Caki2 (cell line): ENCODE measurements at regions of chr1 and their contacts with region 1.

Region 1: GRCh38 chr1:225559326-225559725 is 93.6 kb downstream of the ENAH start:
- DNase-seq: no peak

Region 2: DNA sequence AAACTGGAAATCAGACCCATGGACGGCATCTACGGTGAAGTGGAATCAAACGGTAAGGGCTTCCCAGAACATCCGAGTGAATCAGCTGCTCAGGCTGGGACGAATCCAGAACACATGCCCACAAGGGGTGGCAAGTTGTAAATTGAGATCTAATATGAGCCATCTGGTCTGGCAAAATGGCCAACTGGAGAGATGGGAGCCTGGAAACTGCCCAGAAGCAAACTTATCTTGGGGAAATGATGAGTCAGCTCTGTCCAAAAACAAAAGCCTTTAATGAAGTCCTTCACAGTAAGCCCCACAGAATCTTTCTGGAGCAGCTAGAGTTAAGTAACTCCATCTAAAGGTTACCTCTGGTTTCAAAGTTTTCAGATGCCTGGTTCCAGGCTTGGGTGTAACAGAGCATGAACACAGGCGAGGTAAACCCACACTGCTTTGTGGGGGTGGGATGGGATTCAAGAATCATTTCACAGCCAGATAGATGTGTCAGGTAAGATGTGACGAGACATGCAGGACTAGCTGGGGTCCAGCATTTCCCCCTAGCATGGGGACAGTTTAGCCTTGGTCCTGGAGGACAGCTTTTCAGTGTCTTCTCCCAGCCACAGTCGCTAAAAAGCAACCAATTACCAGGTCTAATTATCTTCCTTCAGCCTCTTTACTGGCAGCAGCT is 207.8 kb after region 1 on chr1:
- in situ Hi-C with region 1: loop called (anchors 5 kb)
- DNase-seq: peak; percentile 43